ENCODE measurements at regions of chr2 and their contacts with region 1.

Region 1: DNA sequence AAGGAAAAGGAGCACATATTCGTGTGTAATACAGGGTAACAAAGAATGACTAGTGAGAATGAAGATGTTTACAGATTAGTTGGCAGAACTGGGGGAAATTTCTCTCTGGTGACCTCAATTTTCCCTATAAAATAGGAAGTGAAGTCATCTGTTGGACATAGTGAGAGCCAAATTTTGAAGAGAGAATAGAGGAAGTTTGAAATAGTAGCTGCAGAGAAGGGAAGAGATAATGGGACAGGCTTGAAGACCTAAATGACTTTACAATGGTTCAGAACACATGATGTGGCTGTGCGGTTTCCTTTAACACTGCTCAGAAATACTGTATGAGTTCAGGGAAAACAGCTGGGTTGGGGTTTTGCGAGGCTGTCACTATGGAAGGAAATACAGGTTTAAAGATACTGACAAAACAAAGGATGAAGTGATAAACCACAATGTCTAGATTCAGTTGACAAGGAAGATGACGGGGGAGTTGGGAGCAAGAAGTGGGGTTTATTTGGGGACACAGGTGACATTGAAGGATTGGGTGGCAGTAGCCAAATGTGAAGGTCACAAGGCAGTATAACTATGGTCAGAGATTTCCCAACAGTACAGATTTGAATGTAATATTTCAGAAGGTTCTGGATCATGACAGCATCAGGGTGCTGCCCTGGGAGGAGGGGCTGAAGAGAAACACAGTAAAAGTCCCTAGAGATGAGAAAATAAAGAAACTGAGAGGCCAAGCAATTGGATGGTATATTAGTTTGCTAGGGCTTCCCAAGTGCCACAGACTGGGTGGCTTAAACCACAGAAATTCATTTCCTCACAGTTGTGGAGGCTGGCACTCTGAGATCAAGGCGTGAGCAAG is 82.6 kb upstream of the TANK start:
- DNase-seq: peak; percentile 88 to 99 (median 98)
- H3K4me3 ChIP-seq: peak overlapping the region in 2 of 7 experiments; percentile 15 to 50
- H3K27ac ChIP-seq: peak overlapping the region; percentile 51 to 80
- H3K4me1 ChIP-seq: peaks cover 9 to 26% (median 18%) of the 10 kb centered on the region in 4 experiments
- H3K27me3 ChIP-seq: no peaks in the 10 kb centered on the region

Region 2: GRCh38 chr2:160794926-160795325 is 282.7 kb before region 1 on chr2:
- CTCF ChIA-PET with region 1: no interaction called
- POLR2A ChIA-PET with region 1: no interaction called
- DNase-seq: peak in 1 of 3 donors; percentile 2
- H3K4me3 ChIP-seq: no peak overlapping the region
- H3K27ac ChIP-seq: no peak overlapping the region
- H3K4me1 ChIP-seq: peaks cover 0 to 7% (median 0%) of the 10 kb centered on the region in 4 experiments
- H3K27me3 ChIP-seq: no peaks in the 10 kb centered on the region

Region 3: GRCh38 chr2:161063157-161063954 is 14.2 kb before region 1 on chr2:
- CTCF ChIA-PET with region 1: interaction called, 15 read pairs
- POLR2A ChIA-PET with region 1: no interaction called
- DNase-seq: peak; percentile 73 to 80 (median 75)
- H3K4me3 ChIP-seq: no peak overlapping the region
- H3K27ac ChIP-seq: no peak overlapping the region
- H3K4me1 ChIP-seq: no peaks in the 10 kb centered on the region
- H3K27me3 ChIP-seq: no peaks in the 10 kb centered on the region

Region 4: GRCh38 chr2:161090411-161090810 is 12.8 kb after region 1 on chr2:
- CTCF ChIA-PET with region 1: interaction called, 22 read pairs
- POLR2A ChIA-PET with region 1: interaction called, 3 read pairs
- DNase-seq: peak; percentile 82 to 97 (median 95)
- H3K4me3 ChIP-seq: peak overlapping the region in 4 of 7 experiments; percentile 8 to 56 (median 34)
- H3K27ac ChIP-seq: peak overlapping the region in 1 of 2 experiments; percentile 49
- H3K4me1 ChIP-seq: peaks cover 12 to 33% (median 20%) of the 10 kb centered on the region in 4 experiments
- H3K27me3 ChIP-seq: no peaks in the 10 kb centered on the region

Region 5: GRCh38 chr2:161136696-161137324 is 59.2 kb after region 1 on chr2:
- CTCF ChIA-PET with region 1: interaction called, 10 read pairs
- POLR2A ChIA-PET with region 1: no interaction called
- DNase-seq: peak; percentile 88 to 97 (median 95)
- H3K4me3 ChIP-seq: peak overlapping the region in 6 of 7 experiments; percentile 44 to 80 (median 60)
- H3K27ac ChIP-seq: peak overlapping the region; percentile 87 to 91
- H3K4me1 ChIP-seq: peaks cover 24 to 63% (median 41%) of the 10 kb centered on the region in 4 experiments
- H3K27me3 ChIP-seq: no peaks in the 10 kb centered on the region

Measured in common myeloid progenitor, CD34-positive (primary cell).